CD8-positive, alpha-beta memory T cell (primary cell): ENCODE measurements at regions of chr4 and their contacts with region 1.

Region 1: DNA sequence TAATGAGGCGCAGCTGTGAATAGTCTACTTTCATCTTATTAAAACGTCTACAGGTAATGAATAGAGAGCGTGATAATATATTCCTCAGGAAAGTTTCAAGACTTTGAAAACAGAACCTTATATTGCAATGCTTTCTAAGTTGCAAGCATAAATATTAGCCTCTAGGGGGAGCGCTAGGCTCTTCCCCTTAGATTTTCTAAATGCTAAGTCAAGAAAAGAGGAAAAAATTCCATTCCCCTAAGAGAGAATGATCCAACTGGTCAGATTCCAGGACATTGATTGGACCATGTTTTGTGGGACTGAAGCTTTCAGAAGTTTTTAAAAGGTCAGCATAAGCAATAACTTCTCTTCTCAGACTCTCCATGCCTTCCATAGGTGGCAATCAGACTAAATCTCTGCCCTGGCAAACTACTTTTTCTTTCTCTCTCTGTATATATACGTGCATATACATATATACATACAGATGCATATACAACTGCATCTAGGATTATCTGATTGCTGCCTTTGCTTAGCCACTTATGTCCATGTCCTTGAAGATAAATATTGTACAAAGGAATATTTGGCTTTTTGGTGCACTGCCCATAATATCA is 492.9 kb downstream of the INPP4B start:
- DNase-seq: peak in 2 of 5 donors; percentile 23 to 34
- H3K4me3 ChIP-seq: no peak overlapping the region
- H3K4me3 Mint-ChIP-seq: peak overlapping the region in 1 of 7 donors; percentile 50
- H3K27ac ChIP-seq: no peak overlapping the region
- H3K27ac Mint-ChIP-seq: peak overlapping the region in 7 of 8 donors; percentile 21 to 83 (median 56)
- H3K4me1 ChIP-seq: peaks cover 92% of the 10 kb centered on the region
- H3K4me1 Mint-ChIP-seq: peaks cover 88 to 99% (median 98%) of the 10 kb centered on the region in 3 donors
- H3K27me3 ChIP-seq: no peaks in the 10 kb centered on the region
- H3K27me3 Mint-ChIP-seq: no peaks in the 10 kb centered on the region

Region 2: GRCh38 chr4:142379277-142380057 is 26.2 kb after region 1 on chr4:
- CTCF ChIA-PET with region 1: interaction called, 14 read pairs
- POLR2A ChIA-PET with region 1: no interaction called
- DNase-seq: no peak
- H3K4me3 ChIP-seq: no peak overlapping the region
- H3K4me3 Mint-ChIP-seq: peak overlapping the region in 3 of 7 donors; percentile 35 to 55 (median 38)
- H3K27ac ChIP-seq: no peak overlapping the region
- H3K27ac Mint-ChIP-seq: peak overlapping the region in 7 of 8 donors; percentile 5 to 72 (median 57)
- H3K4me1 ChIP-seq: peaks cover 73% of the 10 kb centered on the region
- H3K4me1 Mint-ChIP-seq: peaks cover 67 to 89% (median 81%) of the 10 kb centered on the region in 3 donors
- H3K27me3 ChIP-seq: no peaks in the 10 kb centered on the region
- H3K27me3 Mint-ChIP-seq: no peaks in the 10 kb centered on the region

Region 3: DNA sequence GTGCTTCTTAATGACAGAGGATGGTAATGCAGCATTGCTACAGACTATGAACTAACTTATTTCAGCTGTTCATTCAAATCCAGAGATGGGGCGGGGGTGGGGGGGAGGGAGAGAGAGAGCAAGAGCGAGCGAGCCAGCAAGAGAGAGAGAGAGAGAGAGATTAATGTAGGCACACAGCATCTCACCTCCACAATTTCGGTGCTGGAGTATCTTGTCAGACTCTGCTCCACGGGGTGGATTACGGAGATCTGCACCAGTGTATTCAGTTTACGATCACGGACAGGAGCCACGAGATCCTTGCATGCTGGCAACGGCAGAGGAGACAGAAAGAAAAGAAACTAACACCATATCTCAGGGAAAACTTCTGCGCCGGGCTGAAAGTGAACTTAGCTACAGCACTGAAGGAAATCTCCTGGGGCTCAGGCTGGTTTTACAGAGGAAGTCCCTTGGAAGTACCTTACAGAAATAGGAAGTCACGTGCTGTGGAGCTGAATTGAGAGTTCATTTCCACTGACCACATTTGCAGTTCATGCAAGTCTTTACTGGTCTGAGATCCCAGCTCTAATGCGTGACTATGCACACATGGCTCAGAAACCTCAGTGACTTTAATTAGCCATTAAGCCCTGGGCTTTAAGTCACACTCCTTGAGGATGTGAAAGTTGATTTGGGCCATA is 51.9 kb after region 1 on chr4:
- CTCF ChIA-PET with region 1: interaction called, 64 read pairs
- POLR2A ChIA-PET with region 1: interaction called, 5 read pairs
- DNase-seq: peak; percentile 21 to 64 (median 55)
- H3K4me3 ChIP-seq: peak overlapping the region; percentile 71
- H3K4me3 Mint-ChIP-seq: peak overlapping the region; percentile 93 to 100 (median 98)
- H3K27ac ChIP-seq: peak overlapping the region; percentile 51
- H3K27ac Mint-ChIP-seq: peak overlapping the region; percentile 81 to 98 (median 97)
- H3K4me1 ChIP-seq: peaks cover 59% of the 10 kb centered on the region
- H3K4me1 Mint-ChIP-seq: peaks cover 60 to 73% (median 66%) of the 10 kb centered on the region in 3 donors
- H3K27me3 ChIP-seq: no peaks in the 10 kb centered on the region
- H3K27me3 Mint-ChIP-seq: no peaks in the 10 kb centered on the region

Region 4: DNA sequence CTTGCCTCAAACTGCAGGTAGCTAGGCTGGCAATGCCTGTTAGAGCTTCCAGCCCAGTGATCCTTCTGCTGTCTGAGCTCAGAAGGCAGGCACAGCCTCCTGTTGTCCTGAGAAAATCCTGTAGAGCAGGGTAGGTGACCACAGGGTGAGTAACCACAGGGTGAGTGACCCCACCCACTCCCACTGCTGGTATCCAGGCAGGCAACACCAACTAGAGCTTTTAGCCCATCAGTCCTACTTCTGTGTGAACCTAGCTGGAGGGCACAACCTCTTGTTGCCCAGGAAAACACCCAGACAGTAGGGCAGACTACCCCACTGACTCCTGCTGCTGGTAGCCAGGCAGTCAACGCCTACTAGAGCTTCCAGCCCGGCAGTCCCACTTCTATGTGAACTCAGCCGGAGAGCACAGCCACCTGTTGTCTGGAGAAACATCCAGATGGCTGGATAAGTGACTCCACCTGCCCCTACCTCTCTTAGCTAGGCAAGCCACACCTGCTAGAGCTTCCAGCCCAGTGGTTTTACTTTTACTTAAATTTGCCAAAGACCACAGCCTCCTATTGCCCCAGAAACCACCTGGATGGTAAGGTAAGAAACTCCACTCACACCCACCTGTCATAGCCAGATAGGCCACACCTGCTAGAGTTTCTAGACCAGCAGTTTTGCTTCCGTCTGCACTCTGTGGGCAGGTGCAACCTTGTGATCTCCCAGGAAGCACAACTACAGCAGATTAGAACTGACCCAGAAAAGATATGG is 121.3 kb after region 1 on chr4:
- CTCF ChIA-PET with region 1: no interaction called
- POLR2A ChIA-PET with region 1: no interaction called
- DNase-seq: no peak
- H3K4me3 ChIP-seq: no peak overlapping the region
- H3K4me3 Mint-ChIP-seq: no peak overlapping the region
- H3K27ac ChIP-seq: no peak overlapping the region
- H3K27ac Mint-ChIP-seq: peak overlapping the region in 2 of 8 donors; percentile 5 to 41
- H3K4me1 ChIP-seq: peaks cover 15% of the 10 kb centered on the region
- H3K4me1 Mint-ChIP-seq: peaks cover 5 to 8% (median 8%) of the 10 kb centered on the region in 3 donors
- H3K27me3 ChIP-seq: no peaks in the 10 kb centered on the region
- H3K27me3 Mint-ChIP-seq: no peaks in the 10 kb centered on the region

Region 5: DNA sequence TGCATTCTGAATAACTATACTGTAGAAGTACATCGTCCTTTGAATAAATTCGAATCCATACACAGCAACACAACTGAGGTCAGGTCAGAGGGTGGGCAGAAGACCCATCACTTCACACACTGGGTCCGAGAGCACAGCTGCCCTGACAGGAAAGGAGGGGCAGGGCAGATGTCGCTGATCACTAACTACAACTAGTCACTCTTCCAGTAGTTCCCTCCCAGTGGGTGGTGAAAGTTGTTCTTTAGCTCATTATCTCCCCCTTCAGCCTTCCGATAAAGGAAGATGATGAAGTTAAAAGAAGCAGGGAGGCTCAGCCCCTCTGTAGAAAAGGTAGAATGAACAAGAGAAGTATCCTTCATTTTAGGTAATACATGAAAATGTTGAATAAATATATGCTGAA is 214.0 kb after region 1 on chr4:
- CTCF ChIA-PET with region 1: interaction called, 23 read pairs
- POLR2A ChIA-PET with region 1: no interaction called
- DNase-seq: peak; percentile 6 to 64 (median 29)
- H3K4me3 ChIP-seq: peak overlapping the region; percentile 57
- H3K4me3 Mint-ChIP-seq: peak overlapping the region; percentile 78 to 99 (median 85)
- H3K27ac ChIP-seq: peak overlapping the region; percentile 60
- H3K27ac Mint-ChIP-seq: peak overlapping the region; percentile 83 to 98 (median 92)
- H3K4me1 ChIP-seq: peaks cover 65% of the 10 kb centered on the region
- H3K4me1 Mint-ChIP-seq: peaks cover 42 to 65% (median 65%) of the 10 kb centered on the region in 3 donors
- H3K27me3 ChIP-seq: no peaks in the 10 kb centered on the region
- H3K27me3 Mint-ChIP-seq: no peaks in the 10 kb centered on the region